ENCODE measurements at regions of chr10 and their contacts with region 1.

Region 1: DNA sequence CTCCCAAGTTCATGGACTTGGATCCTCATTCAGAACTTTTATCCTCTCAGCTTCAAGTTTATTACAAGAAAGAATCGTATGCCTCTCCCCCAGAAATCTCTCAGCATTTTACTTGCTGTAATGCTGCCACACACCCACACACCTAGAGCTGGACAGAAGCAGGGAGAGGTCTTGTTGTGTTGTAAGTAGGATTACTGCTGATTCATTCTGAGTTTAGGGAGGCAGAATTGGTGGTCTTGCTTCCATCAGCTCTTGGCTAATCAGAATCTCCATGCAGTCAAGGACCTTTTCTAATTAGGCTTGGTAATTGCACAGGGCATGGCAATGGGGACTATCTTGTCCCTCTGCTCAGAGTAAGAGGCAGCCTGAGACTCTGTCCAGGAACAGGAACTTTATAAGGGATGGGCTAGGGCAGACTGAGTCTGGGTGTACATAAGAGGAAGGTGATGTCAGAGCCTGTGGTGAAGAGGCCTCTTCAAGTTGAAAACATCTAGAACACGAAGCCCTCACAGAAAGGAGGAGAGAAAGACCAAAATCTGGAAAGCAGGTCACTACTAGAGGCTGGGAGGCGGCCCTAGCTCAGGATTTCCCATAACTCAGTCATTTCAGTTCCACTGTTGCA is 7.0 kb upstream of the PTPRE start:
- DNase-seq: no peak
- H3K4me3 ChIP-seq: no peak overlapping the region
- H3K27ac ChIP-seq: no peak overlapping the region
- H3K4me1 ChIP-seq: no peaks in the 10 kb centered on the region
- H3K27me3 ChIP-seq: no peaks in the 10 kb centered on the region
- CTCF ChIP-seq: no peak

Region 2: DNA sequence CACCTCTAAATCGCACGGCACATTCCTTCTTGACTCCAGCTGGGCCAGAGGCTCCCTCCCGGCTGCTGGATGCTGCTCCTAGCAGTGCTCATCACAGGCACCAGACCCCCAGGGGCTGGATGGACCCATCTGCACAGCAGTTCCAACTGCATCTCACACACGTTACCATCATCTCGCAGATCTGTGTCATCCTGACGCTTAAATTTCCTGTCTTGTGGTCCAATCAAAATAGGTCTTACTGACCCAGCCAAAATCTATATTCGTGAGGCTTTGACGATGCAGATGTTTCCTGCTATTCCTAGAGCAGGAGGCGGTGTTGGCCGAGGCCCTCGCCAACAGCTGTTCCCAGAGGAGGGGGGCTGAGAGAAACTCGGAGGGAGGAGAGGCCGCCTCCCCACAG is 118.4 kb after region 1 on chr10:
- CTCF ChIA-PET with region 1: no interaction called
- dilution Hi-C with region 1: loop called (anchors 5 kb)
- in situ Hi-C with region 1: loop called in 1 of 2 experiments (anchors 5 kb)
- intact Hi-C with region 1: no loop called
- DNase-seq: no peak
- H3K4me3 ChIP-seq: no peak overlapping the region
- H3K27ac ChIP-seq: no peak overlapping the region
- H3K4me1 ChIP-seq: no peaks in the 10 kb centered on the region
- H3K27me3 ChIP-seq: no peaks in the 10 kb centered on the region
- CTCF ChIP-seq: no peak

Measured in mammary epithelial cell (primary cell).